B cell (primary cell): ENCODE measurements at regions of chr12 and their contacts with region 1.

Region 1: DNA sequence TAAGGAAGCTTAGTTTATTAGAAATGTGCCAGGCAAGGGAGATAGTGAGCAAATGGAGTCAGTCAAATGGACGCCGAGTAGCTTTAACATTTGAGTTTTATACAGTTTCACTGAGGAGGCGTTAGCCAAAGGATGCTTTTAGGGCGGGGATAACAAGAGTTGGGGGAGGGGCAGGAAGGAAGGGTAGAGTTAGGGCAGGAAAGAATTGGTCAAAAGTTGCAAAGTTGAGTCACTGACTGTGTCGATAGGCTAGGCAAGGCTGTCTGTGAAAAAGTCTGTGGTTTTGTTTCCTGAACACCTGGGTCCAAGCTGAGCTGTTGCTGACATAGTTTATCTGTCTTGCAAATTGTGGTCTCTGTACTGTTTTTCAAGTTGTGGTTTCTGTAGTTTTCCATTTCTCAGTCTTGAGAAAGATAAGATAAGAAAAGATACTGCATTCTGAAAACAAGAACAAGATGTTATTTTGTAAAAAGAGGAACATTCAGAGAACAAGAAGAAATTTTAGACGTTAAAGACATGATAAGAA is 62.6 kb upstream of the RESF1 start:
- DNase-seq: peak; percentile 96
- ATAC-seq: peak; percentile 91
- H3K4me3 ChIP-seq: peak overlapping the region in 2 of 5 experiments; percentile 11 to 60
- H3K4me3 Mint-ChIP-seq: peak overlapping the region; percentile 72
- H3K27ac ChIP-seq: peak overlapping the region; percentile 89 to 96
- H3K27ac Mint-ChIP-seq: peak overlapping the region; percentile 91
- H3K4me1 ChIP-seq: peaks cover 42 to 55% of the 10 kb centered on the region in 2 donors
- H3K4me1 Mint-ChIP-seq: peaks cover 52% of the 10 kb centered on the region
- H3K27me3 ChIP-seq: no peaks in the 10 kb centered on the region
- H3K27me3 Mint-ChIP-seq: no peaks in the 10 kb centered on the region
- CTCF ChIP-seq: no peak

Region 2: GRCh38 chr12:31728917-31729640 is 167.5 kb before region 1 on chr12 and contains the start of gene AMN1:
- CTCF ChIA-PET with region 1: interaction called, 3 read pairs
- POLR2A ChIA-PET with region 1: interaction called, 18 read pairs
- intact Hi-C with region 1: loop called (anchors 1 kb)
- DNase-seq: peak; percentile 100
- ATAC-seq: peak; percentile 87
- H3K4me3 ChIP-seq: peak within 1 kb of the TSS; percentile 74 to 99 (median 85)
- H3K4me3 Mint-ChIP-seq: peak within 1 kb of the TSS; percentile 98
- H3K27ac ChIP-seq: peak within 1 kb of the TSS; percentile 94 to 96
- H3K27ac Mint-ChIP-seq: peak within 1 kb of the TSS; percentile 98
- H3K4me1 ChIP-seq: peaks cover 38 to 41% of the 10 kb centered on the region in 2 donors
- H3K4me1 Mint-ChIP-seq: peaks cover 73% of the 10 kb centered on the region
- H3K27me3 ChIP-seq: no peaks in the 10 kb centered on the region
- H3K27me3 Mint-ChIP-seq: no peaks in the 10 kb centered on the region
- CTCF ChIP-seq: no peak
- total RNA-seq, gene AMN1: 30.4 and 32.6 TPM in 2 replicates

Region 3: DNA sequence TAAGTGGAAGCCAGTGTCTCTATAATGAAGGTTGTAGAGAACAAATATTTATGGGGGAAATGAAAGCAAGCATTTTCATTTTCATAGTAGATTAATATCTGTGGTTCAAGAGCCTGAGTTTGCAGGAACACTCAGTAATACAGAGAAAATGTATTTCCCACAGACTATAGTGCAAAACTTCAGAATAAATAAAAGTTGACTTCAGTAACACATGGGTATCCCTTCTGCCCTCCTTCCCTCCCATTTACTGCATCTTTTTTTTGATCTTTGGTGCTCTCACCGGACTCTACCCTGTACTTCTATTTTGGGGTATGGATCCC is 92.4 kb before region 1 on chr12:
- CTCF ChIA-PET with region 1: no interaction called
- POLR2A ChIA-PET with region 1: interaction called, 3 read pairs
- intact Hi-C with region 1: loop called (anchors 2 kb)
- DNase-seq: no peak
- ATAC-seq: no peak
- H3K4me3 ChIP-seq: peak overlapping the region in 1 of 5 experiments; percentile 21
- H3K4me3 Mint-ChIP-seq: peak overlapping the region; percentile 85
- H3K27ac ChIP-seq: peak overlapping the region in 1 of 2 donors; percentile 54
- H3K27ac Mint-ChIP-seq: peak overlapping the region; percentile 90
- H3K4me1 ChIP-seq: peaks cover 21 to 43% of the 10 kb centered on the region in 2 donors
- H3K4me1 Mint-ChIP-seq: peaks cover 51% of the 10 kb centered on the region
- H3K27me3 ChIP-seq: no peaks in the 10 kb centered on the region
- H3K27me3 Mint-ChIP-seq: no peaks in the 10 kb centered on the region
- CTCF ChIP-seq: no peak

Region 4: DNA sequence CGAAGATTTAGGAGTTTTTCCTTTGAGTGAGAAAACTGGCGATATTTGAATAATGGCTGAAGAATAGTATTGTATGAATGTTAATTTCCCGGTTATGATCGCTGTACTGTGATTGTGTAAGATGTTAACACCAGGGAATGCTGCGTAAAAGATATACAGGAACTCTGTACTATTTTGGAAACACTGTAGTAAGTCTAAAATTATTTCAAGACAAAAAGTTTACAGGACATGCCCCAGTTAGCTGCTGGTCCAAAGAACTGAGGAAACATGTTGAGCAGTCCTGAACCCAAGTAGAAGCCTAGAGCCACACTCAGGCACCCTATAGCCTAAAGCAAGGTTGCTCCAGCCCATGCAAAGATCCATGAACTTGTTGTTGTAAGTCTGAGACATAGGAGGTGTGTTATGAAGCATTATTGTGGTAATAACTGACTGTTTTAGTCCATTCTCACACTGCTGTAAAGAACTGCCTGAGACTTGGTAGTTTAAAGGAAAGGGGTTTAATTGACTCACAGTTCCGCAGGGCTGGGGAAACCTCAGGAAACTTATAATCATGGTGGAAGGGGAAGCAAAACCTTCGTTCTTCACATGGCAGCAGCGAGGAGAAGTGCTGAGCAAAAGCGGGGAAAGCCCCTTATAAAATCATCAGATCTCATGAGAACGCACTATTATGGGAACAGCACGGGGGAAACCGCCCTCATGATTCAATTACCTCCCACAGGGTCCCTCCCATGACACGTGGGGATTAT is 37.2 kb before region 1 on chr12:
- CTCF ChIA-PET with region 1: interaction called, 3 read pairs
- POLR2A ChIA-PET with region 1: interaction called, 4 read pairs
- intact Hi-C with region 1: loop called (anchors 1 kb)
- DNase-seq: peak; percentile 88
- ATAC-seq: peak; percentile 85
- H3K4me3 ChIP-seq: peak overlapping the region in 1 of 5 experiments; percentile 49
- H3K4me3 Mint-ChIP-seq: peak overlapping the region; percentile 44
- H3K27ac ChIP-seq: peak overlapping the region; percentile 45 to 67
- H3K27ac Mint-ChIP-seq: peak overlapping the region; percentile 86
- H3K4me1 ChIP-seq: peaks cover 16 to 17% of the 10 kb centered on the region in 2 donors
- H3K4me1 Mint-ChIP-seq: peaks cover 29% of the 10 kb centered on the region
- H3K27me3 ChIP-seq: no peaks in the 10 kb centered on the region
- H3K27me3 Mint-ChIP-seq: no peaks in the 10 kb centered on the region
- CTCF ChIP-seq: no peak

Region 5: GRCh38 chr12:31906557-31907301 is 10.2 kb after region 1 on chr12:
- CTCF ChIA-PET with region 1: interaction called, 3 read pairs
- POLR2A ChIA-PET with region 1: interaction called, 6 read pairs
- intact Hi-C with region 1: loop called (anchors 1 kb)
- DNase-seq: peak; percentile 63
- ATAC-seq: peak; percentile 81
- H3K4me3 ChIP-seq: peak overlapping the region in 1 of 5 experiments; percentile 24
- H3K4me3 Mint-ChIP-seq: peak overlapping the region; percentile 50
- H3K27ac ChIP-seq: peak overlapping the region; percentile 39 to 67
- H3K27ac Mint-ChIP-seq: peak overlapping the region; percentile 85
- H3K4me1 ChIP-seq: peaks cover 19 to 27% of the 10 kb centered on the region in 2 donors
- H3K4me1 Mint-ChIP-seq: peaks cover 30% of the 10 kb centered on the region
- H3K27me3 ChIP-seq: no peaks in the 10 kb centered on the region
- H3K27me3 Mint-ChIP-seq: no peaks in the 10 kb centered on the region
- CTCF ChIP-seq: no peak